Thyroid gland (tissue), 4 donors: ENCODE measurements at regions of chr6 and their contacts with region 1.

Region 1: GRCh38 chr6:166395356-166395755 is 12.6 kb upstream of the MPC1 start:
- DNase-seq: no peak
- H3K4me3 ChIP-seq: no peak overlapping the region
- H3K27ac ChIP-seq: no peak overlapping the region
- H3K4me1 ChIP-seq: no peaks in the 10 kb centered on the region
- H3K27me3 ChIP-seq: no peaks in the 10 kb centered on the region
- CTCF ChIP-seq: no peak
- POLR2A ChIP-seq: no peak

Region 2: DNA sequence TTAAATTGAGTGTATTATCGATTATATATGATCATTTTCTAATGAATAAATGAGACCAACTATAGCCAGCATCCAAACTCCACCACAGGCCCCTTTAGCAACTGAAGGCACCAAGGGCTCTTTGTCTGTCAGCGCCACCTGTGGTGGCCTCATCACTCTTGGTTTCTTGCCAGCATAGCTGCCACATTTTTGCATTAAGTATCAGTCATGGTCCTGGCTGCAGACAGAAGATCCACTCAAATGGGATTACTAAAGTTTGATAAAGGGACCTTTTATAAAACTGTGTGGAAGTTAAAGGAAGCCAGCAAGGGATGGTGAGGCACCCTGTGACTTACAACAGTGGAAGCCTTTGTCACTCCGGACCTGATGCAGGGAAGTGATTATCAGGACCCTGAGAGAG is 1248.9 kb before region 1 on chr6:
- intact Hi-C with region 1: no loop called
- DNase-seq: no peak
- H3K4me3 ChIP-seq: no peak overlapping the region
- H3K27ac ChIP-seq: no peak overlapping the region
- H3K4me1 ChIP-seq: no peaks in the 10 kb centered on the region
- H3K27me3 ChIP-seq: no peaks in the 10 kb centered on the region
- CTCF ChIP-seq: no peak
- POLR2A ChIP-seq: no peak

Region 3: GRCh38 chr6:166156942-166157341 is 238.4 kb before region 1 on chr6:
- intact Hi-C with region 1: loop called (anchors 5 kb)
- DNase-seq: no peak
- H3K4me3 ChIP-seq: no peak overlapping the region
- H3K27ac ChIP-seq: no peak overlapping the region
- H3K4me1 ChIP-seq: no peaks in the 10 kb centered on the region
- H3K27me3 ChIP-seq: no peaks in the 10 kb centered on the region
- CTCF ChIP-seq: peak in 4 of 6 experiments; percentile 7 to 49 (median 38)
- POLR2A ChIP-seq: no peak

Region 4: DNA sequence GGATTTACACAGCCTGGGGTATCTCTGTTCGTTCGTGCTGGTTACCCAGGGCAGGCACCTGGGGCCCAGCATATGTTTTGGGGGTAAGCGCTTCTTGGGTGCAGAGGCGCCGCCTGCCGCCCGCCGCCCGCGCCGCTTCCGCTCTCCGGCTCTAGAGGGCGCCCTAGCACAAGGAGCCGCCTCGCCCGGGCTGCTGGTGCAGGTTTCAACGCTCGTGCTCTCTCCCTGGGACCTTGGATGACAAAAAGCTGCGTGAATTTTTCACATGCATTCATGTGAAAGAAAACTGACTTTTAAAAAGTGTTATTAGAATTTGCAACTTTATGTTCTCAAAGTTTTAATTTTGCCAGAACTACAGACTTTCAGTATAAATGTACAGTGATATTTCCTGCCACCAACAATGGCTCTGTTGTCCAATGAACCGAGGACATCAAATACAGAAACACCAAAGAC is 119.6 kb before region 1 on chr6:
- intact Hi-C with region 1: loop called (anchors 2 kb)
- DNase-seq: peak; percentile 57 to 66
- H3K4me3 ChIP-seq: no peak overlapping the region
- H3K27ac ChIP-seq: no peak overlapping the region
- H3K4me1 ChIP-seq: peaks cover 3 to 11% of the 10 kb centered on the region in 2 donors
- H3K27me3 ChIP-seq: no peaks in the 10 kb centered on the region
- CTCF ChIP-seq: peak; percentile 77 to 100 (median 96)
- POLR2A ChIP-seq: no peak